Breast epithelium (tissue), 4 donors: ENCODE measurements at regions of chr12 and their contacts with region 1.

Region 1: GRCh38 chr12:122661246-122661645 is 41.9 kb downstream of the HCAR2 start:
- DNase-seq: no peak
- H3K4me3 ChIP-seq: no peak overlapping the region
- H3K27ac ChIP-seq: no peak overlapping the region
- H3K4me1 ChIP-seq: no peaks in the 10 kb centered on the region
- H3K27me3 ChIP-seq: no peaks in the 10 kb centered on the region
- CTCF ChIP-seq: no peak
- POLR2A ChIP-seq: no peak

Region 2: DNA sequence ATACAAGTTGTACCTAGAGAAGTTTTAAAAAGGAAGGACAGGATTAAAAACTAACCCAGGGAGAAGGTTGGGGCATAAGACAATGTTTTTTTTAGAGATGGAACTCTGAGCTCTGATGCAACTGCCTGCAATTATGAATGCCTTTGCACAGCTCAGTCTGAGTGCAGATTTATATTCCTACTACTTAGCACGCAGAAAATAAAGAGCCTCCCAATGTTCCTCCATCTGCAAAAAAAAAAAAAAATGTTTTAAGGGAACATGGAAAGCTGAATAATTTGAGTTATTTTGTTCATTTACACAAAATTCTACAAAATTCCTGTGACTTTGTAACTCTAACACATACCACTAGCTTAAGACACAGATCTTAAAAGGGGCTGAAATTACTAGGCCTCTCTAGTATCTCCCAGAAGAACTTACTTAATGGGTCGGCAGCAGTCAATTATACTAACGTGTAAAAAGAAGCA is 254.5 kb before region 1 on chr12:
- intact Hi-C with region 1: loop called (anchors 5 kb)
- DNase-seq: no peak
- H3K4me3 ChIP-seq: no peak overlapping the region
- H3K27ac ChIP-seq: no peak overlapping the region
- H3K4me1 ChIP-seq: peaks cover 0 to 5% of the 10 kb centered on the region in 2 donors
- H3K27me3 ChIP-seq: no peaks in the 10 kb centered on the region
- CTCF ChIP-seq: no peak
- POLR2A ChIP-seq: no peak

Region 3: DNA sequence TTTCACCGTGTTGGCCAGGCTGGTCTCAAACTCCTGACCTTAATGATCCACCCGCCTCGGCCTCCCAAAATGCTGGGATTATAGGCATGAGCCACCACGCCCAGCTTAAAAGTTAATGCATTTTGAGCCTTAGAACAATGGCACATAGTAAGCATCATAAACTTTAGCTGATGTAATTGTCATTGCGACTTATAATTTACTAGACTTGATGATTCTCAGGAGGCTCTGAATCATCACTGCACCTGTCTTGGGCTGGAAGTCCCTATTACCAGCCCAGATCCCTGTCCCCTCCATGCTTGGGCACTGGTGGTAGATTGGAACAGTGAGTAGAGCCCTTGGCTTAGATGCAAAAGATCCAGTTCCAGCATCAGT is 748.8 kb after region 1 on chr12:
- intact Hi-C with region 1: no loop called
- DNase-seq: no peak
- H3K4me3 ChIP-seq: no peak overlapping the region
- H3K27ac ChIP-seq: no peak overlapping the region
- H3K4me1 ChIP-seq: no peaks in the 10 kb centered on the region
- H3K27me3 ChIP-seq: no peaks in the 10 kb centered on the region
- CTCF ChIP-seq: no peak
- POLR2A ChIP-seq: no peak